ENCODE measurements at regions of chr6 and their contacts with region 1.

Region 1: GRCh38 chr6:37018198-37019064 is 13.0 kb downstream of the FGD2 start:
- DNase-seq: peak; percentile 96
- H3K4me3 Mint-ChIP-seq: no peak overlapping the region
- H3K27ac Mint-ChIP-seq: peak overlapping the region; percentile 85
- H3K4me1 Mint-ChIP-seq: peaks cover 58% of the 10 kb centered on the region
- H3K27me3 Mint-ChIP-seq: no peaks in the 10 kb centered on the region

Region 2: GRCh38 chr6:36765594-36766398 is 252.6 kb before region 1 on chr6:
- CTCF ChIA-PET with region 1: interaction called, 143 read pairs
- DNase-seq: peak; percentile 91
- H3K4me3 Mint-ChIP-seq: no peak overlapping the region
- H3K27ac Mint-ChIP-seq: no peak overlapping the region
- H3K4me1 Mint-ChIP-seq: peaks cover 45% of the 10 kb centered on the region
- H3K27me3 Mint-ChIP-seq: no peaks in the 10 kb centered on the region

Region 3: GRCh38 chr6:36874443-36875249 is 143.8 kb before region 1 on chr6 and contains the start of gene PPIL1:
- CTCF ChIA-PET with region 1: interaction called, 46 read pairs
- DNase-seq: peak; percentile 86
- H3K4me3 Mint-ChIP-seq: peak within 1 kb of the TSS; percentile 92
- H3K27ac Mint-ChIP-seq: peak within 1 kb of the TSS; percentile 96
- H3K4me1 Mint-ChIP-seq: peaks cover 62% of the 10 kb centered on the region
- H3K27me3 Mint-ChIP-seq: peaks cover 8% of the 10 kb centered on the region

Region 4: DNA sequence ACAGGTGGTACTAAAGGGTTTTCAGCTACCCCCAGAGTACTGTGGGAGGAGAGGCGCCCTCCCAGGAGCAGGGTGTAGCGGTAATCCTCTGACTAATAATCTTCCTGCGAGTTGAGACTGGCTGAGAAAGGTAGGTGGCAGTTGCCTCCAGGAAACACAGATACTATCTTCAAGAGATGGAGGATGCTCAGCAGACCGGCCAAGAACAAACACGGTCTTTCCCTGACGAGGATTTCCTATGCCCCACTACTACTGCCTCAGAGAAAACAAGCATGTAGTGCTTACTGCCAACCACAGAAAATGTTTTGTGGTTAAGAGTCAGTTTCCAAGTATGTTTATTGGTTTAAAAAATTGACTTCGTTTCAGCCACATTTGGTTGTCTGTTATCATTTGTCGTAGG is 105.8 kb before region 1 on chr6:
- CTCF ChIA-PET with region 1: interaction called, 15 read pairs
- DNase-seq: peak; percentile 78
- H3K4me3 Mint-ChIP-seq: peak overlapping the region; percentile 64
- H3K27ac Mint-ChIP-seq: peak overlapping the region; percentile 93
- H3K4me1 Mint-ChIP-seq: peaks cover 67% of the 10 kb centered on the region
- H3K27me3 Mint-ChIP-seq: no peaks in the 10 kb centered on the region

Region 5: DNA sequence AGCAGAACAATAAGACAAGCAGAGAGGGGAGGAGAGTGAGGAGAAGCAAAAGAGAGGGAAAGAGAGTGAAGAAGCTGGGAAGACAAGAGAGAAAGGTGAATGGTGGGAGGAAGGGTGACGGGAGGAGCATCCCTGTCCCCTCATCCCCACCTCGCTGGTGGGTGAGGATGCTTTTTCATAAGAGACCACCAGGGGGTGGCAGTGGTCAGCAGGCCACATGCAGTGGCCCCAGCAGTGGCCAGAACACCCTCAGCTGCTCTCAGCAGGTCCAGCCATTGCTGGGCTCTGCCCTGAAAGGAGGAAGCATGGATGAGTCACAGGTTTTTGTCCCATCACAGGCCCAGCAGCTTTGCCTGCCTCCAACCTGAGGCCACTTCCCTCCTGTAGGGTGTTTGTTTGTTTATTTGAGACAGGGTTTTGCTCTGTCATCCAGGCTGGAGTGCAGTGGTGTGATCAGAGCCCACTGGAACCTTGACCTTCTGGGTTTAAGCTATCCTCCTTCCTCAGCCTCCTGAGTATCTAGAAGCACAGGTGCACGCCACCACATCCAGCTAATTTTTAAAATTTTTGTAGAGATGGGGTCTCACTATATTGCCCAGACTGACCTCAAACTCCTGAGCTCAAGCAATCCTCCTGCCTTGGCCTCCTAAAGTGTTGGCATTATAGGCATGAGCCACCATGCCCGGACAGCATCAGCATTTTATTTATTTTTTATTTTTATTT is 11.0 kb after region 1 on chr6:
- CTCF ChIA-PET with region 1: interaction called, 14 read pairs
- DNase-seq: peak; percentile 60
- H3K4me3 Mint-ChIP-seq: no peak overlapping the region
- H3K27ac Mint-ChIP-seq: peak overlapping the region; percentile 79
- H3K4me1 Mint-ChIP-seq: peaks cover 78% of the 10 kb centered on the region
- H3K27me3 Mint-ChIP-seq: no peaks in the 10 kb centered on the region

Region 6: GRCh38 chr6:37207903-37208456 is 189.5 kb after region 1 on chr6:
- CTCF ChIA-PET with region 1: interaction called, 697 read pairs
- DNase-seq: peak; percentile 95
- H3K4me3 Mint-ChIP-seq: peak overlapping the region; percentile 46
- H3K27ac Mint-ChIP-seq: peak overlapping the region; percentile 89
- H3K4me1 Mint-ChIP-seq: peaks cover 73% of the 10 kb centered on the region
- H3K27me3 Mint-ChIP-seq: no peaks in the 10 kb centered on the region

Measured in activated naive CD4-positive, alpha-beta T cell treated with anti-CD3 and anti-CD28 coated beads, Interleukin-2, amount 10 ng/mL, durations not matched to agents 7 days and 5 days (primary cell).